Left cardiac atrium (tissue), 4 donors: ENCODE measurements at regions of chr15 and their contacts with region 1.

Region 1: DNA sequence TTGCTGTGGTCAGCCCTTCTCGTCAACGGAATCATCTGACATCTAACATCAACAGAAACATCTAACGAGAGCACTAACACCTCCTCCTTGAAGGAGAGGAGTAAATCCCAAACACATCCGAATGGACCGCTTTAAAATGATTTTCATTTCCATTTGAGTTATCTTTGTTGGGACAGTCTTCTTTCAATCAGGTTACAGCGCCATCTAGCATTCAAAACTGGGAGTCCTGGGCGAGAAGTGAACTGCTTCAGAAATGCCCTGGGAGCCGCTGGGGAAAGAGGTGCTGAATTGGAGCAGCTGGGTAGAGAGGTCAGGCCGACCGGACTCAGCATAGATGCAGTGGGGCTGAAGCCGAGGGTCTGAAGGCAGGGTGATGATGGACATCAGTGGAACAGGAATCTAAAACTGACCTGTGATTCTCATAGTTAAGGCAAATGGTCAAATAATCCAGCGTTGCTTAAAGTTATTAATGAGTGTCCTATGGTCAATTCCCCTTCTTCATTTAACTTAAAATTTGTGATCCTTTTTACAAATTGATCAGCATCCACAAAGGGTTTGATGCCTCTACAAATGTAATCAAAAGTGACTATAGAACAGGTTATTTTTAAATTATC is 170.0 kb upstream of the NDN start:
- DNase-seq: no peak
- ATAC-seq: peak in 1 of 2 donors; percentile 35

Region 2: GRCh38 chr15:23588268-23588667 is 268.9 kb before region 1 on chr15:
- intact Hi-C with region 1: no loop called
- DNase-seq: no peak
- ATAC-seq: no peak

Region 3: DNA sequence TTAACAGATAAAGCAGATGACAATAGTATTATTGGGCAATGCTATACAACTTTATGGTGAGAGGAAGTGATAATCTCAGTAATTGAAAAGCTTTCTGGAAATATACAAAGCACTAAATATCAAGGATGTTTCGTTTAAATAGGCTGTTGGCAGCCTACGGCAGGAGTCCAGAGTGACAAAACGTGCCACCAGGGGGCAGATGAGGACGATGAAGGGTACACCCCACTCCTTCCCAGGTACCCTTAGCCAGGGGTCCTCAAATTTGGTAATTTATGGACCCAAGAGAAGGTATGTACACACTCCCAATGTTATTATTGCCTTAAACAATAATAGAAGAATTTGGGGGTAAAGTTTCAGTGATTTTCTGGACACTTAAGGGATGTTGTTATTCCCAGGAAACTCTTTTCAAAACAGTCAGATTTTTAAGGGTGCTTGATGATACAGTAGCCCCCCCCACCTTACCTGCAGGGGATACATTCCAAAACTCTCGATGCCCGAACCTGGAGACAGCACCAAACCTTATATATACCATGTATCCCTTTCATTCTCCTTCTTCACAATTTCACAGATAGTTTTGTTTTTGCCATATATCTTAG is 208.1 kb before region 1 on chr15:
- intact Hi-C with region 1: loop called in 1 of 2 experiments (anchors 5 kb)
- DNase-seq: no peak
- ATAC-seq: peak in 1 of 2 donors; percentile 59